ENCODE measurements at regions of chr12 and their contacts with region 1.

Region 1: GRCh38 chr12:116599285-116600136 is 40.3 kb downstream of the MAP1LC3B2 start:
- DNase-seq: peak; percentile 96
- H3K4me3 ChIP-seq: peak overlapping the region; percentile 44 to 53 (median 48)
- H3K27ac ChIP-seq: peak overlapping the region; percentile 85 to 89 (median 86)
- H3K4me1 ChIP-seq: peaks cover 28 to 43% (median 36%) of the 10 kb centered on the region in 4 donors
- H3K27me3 ChIP-seq: no peaks in the 10 kb centered on the region
- CTCF ChIP-seq: peak; percentile 58 to 80 (median 77)
- EP300 ChIP-seq: peak; percentile 49
- POLR2A ChIP-seq: no peak

Region 2: GRCh38 chr12:115998119-115998633 is 601.3 kb before region 1 on chr12:
- intact Hi-C with region 1: loop called (anchors 5 kb)
- DNase-seq: no peak
- H3K4me3 ChIP-seq: no peak overlapping the region
- H3K27ac ChIP-seq: peak overlapping the region; percentile 44 to 71 (median 52)
- H3K4me1 ChIP-seq: peaks cover 12 to 29% (median 25%) of the 10 kb centered on the region in 4 donors
- H3K27me3 ChIP-seq: no peaks in the 10 kb centered on the region
- CTCF ChIP-seq: peak; percentile 74 to 90 (median 78)
- EP300 ChIP-seq: no peak
- POLR2A ChIP-seq: no peak

Region 3: DNA sequence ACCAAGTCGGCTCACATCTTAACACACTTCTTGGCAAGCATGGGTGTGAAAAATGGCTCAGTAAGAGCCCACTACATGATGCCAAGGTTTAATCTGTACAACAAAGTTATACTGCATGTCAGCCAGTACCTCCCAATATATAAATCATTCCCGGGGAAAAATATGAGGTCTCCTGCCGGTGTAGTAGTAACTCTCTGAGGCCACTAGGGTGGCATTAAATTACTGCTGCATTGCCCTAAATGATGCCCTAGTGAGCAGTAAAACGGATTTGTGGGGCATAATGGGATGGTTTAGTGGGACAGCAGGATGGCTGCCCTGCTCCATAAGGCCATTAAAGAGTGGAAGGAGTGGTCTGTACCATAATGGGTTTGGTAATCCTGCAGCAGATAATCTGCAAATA is 589.7 kb before region 1 on chr12:
- intact Hi-C with region 1: loop called (anchors 5 kb)
- DNase-seq: no peak
- H3K4me3 ChIP-seq: no peak overlapping the region
- H3K27ac ChIP-seq: no peak overlapping the region
- H3K4me1 ChIP-seq: peaks cover 0 to 10% (median 8%) of the 10 kb centered on the region in 4 donors
- H3K27me3 ChIP-seq: no peaks in the 10 kb centered on the region
- CTCF ChIP-seq: peak in 1 of 3 experiments; percentile 34
- EP300 ChIP-seq: no peak
- POLR2A ChIP-seq: no peak

Region 4: GRCh38 chr12:116277393-116278278 is 321.9 kb before region 1 on chr12 and contains the start of gene MED13L:
- intact Hi-C with region 1: loop called (anchors 2 kb)
- DNase-seq: peak; percentile 97
- H3K4me3 ChIP-seq: peak within 1 kb of the TSS; percentile 70 to 97 (median 76)
- H3K27ac ChIP-seq: peak within 1 kb of the TSS; percentile 89 to 97 (median 95)
- H3K4me1 ChIP-seq: peaks cover 32 to 42% (median 36%) of the 10 kb centered on the region in 4 donors
- H3K27me3 ChIP-seq: no peaks in the 10 kb centered on the region
- CTCF ChIP-seq: peak; percentile 49 to 64 (median 53)
- EP300 ChIP-seq: no peak
- POLR2A ChIP-seq: no peak
- total RNA-seq, gene MED13L: 141 to 350 (median 175) TPM

Region 5: GRCh38 chr12:116382686-116383531 is 216.6 kb before region 1 on chr12:
- intact Hi-C with region 1: loop called (anchors 10 kb)
- DNase-seq: no peak
- H3K4me3 ChIP-seq: no peak overlapping the region
- H3K27ac ChIP-seq: peak overlapping the region in 3 of 4 donors; percentile 4 to 45 (median 40)
- H3K4me1 ChIP-seq: peaks cover 15 to 41% (median 32%) of the 10 kb centered on the region in 4 donors
- H3K27me3 ChIP-seq: no peaks in the 10 kb centered on the region
- CTCF ChIP-seq: no peak
- EP300 ChIP-seq: no peak
- POLR2A ChIP-seq: no peak

Region 6: DNA sequence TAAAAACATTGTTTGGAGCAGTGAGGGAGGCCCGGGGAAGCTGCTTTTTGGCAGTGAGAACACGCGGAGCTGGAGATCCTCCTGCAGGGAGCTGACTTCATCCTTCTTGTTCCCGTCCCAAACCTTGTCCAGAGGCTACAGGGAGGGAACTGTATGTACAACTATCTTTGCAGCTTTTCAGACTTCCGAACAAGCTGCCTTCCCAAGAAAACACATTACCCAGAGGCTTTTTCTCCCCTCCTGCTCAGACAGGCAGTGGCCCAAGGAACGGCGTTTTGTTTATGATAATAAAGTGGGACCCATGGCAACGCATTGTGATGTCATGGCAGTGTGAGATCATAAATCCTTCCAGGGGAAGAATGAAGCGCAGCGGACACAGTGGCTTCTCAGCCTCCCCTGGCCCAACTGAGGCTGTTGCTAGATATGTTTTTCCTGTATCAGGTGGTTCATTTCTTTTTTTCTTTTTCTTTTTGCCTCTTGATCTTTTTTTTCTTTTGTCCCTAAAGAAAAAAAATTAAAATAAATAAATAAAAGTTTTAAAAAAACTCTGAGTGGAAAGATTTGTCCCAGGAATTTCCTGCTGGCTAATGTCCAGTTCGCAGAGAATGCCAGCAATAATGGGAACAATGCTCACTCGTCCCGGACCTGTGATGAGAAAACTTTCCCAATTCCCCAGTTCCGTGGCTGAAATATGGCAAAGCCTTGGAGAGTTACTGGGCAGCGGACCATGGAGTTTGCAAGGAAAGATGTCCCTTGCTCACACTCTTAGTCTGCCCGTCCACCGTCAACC is 143.8 kb before region 1 on chr12:
- intact Hi-C with region 1: loop called (anchors 10 kb)
- DNase-seq: peak; percentile 96
- H3K4me3 ChIP-seq: peak overlapping the region; percentile 9 to 20 (median 20)
- H3K27ac ChIP-seq: peak overlapping the region; percentile 72 to 88 (median 84)
- H3K4me1 ChIP-seq: peaks cover 11 to 30% (median 27%) of the 10 kb centered on the region in 4 donors
- H3K27me3 ChIP-seq: peaks cover 0 to 5% (median 0%) of the 10 kb centered on the region in 4 donors
- CTCF ChIP-seq: no peak
- EP300 ChIP-seq: peak; percentile 80
- POLR2A ChIP-seq: no peak

Region 7: GRCh38 chr12:116537149-116537904 is 62.2 kb before region 1 on chr12:
- intact Hi-C with region 1: no loop called
- DNase-seq: no peak
- H3K4me3 ChIP-seq: no peak overlapping the region
- H3K27ac ChIP-seq: peak overlapping the region in 3 of 4 donors; percentile 6 to 41 (median 7)
- H3K4me1 ChIP-seq: peaks cover 26 to 52% (median 44%) of the 10 kb centered on the region in 4 donors
- H3K27me3 ChIP-seq: no peaks in the 10 kb centered on the region
- CTCF ChIP-seq: no peak
- EP300 ChIP-seq: no peak
- POLR2A ChIP-seq: no peak

Region 8: DNA sequence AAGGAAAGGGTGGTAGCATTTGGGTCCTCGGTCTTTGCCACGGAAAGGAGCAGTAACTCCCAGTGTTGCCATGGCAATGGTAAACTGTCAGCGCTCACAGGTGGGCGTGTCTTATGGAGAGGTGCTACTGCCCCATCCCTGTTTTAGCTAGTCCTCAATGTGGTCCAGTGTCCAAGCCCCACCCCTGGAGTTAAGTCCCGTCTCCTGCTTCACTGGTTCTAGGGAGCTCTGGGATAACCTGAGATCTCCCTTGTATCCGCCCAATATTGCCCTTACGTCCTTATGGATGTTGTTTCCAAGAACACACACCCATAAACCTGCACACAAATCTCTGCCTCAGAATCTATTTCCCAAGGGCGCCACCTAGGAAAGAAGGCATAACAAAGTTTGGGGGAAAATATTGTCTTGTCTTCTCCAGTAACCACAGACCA is 74.2 kb after region 1 on chr12:
- intact Hi-C with region 1: no loop called
- DNase-seq: no peak
- H3K4me3 ChIP-seq: no peak overlapping the region
- H3K27ac ChIP-seq: no peak overlapping the region
- H3K4me1 ChIP-seq: peaks cover 4 to 17% (median 14%) of the 10 kb centered on the region in 4 donors
- H3K27me3 ChIP-seq: peaks cover 0 to 4% (median 0%) of the 10 kb centered on the region in 4 donors
- CTCF ChIP-seq: no peak
- EP300 ChIP-seq: no peak
- POLR2A ChIP-seq: no peak

Region 9: DNA sequence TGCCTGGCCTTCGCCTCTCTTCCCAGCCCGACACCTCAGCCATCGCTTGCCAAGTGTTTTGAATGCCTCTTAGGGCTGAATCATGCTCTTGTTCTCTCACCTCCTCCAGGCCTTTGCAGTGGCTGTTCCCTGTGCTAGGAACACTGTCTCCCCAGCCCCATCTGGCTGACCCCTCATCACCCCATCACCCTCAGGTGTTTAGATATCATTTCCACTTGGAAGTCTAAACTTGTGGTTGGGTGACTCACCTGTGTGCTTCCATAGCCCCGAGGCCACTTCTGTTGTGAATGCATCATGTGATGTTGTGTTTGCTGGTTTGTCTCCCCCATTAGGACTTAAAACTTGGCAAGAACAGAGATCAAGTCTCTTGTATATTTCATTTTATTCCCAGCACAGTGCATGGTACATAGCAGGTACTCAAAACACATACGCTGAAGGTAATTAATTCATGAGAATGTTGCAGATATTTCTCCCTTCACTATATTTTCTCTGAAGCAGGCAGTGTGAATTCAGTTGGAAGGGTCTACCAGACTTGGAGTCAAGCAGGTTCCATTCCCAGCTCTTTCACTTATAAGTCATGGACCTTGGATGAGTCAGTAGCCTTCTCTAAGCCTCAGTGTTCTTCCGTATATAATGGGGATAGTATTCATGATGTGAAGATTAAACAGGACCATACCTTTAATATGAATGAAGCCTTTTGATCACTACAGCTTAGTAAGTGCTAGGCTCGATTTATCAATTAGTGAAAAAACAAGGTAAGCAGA is 213.9 kb after region 1 on chr12:
- intact Hi-C with region 1: no loop called
- DNase-seq: no peak
- H3K4me3 ChIP-seq: no peak overlapping the region
- H3K27ac ChIP-seq: no peak overlapping the region
- H3K4me1 ChIP-seq: peaks cover 6 to 9% (median 8%) of the 10 kb centered on the region in 4 donors
- H3K27me3 ChIP-seq: no peaks in the 10 kb centered on the region
- CTCF ChIP-seq: no peak
- EP300 ChIP-seq: no peak
- POLR2A ChIP-seq: no peak

Region 10: GRCh38 chr12:117986705-117987469 is 1387.4 kb after region 1 on chr12:
- intact Hi-C with region 1: no loop called
- DNase-seq: no peak
- H3K4me3 ChIP-seq: no peak overlapping the region
- H3K27ac ChIP-seq: no peak overlapping the region
- H3K4me1 ChIP-seq: no peaks in the 10 kb centered on the region
- H3K27me3 ChIP-seq: peaks cover 0 to 6% (median 0%) of the 10 kb centered on the region in 4 donors
- CTCF ChIP-seq: no peak
- EP300 ChIP-seq: no peak
- POLR2A ChIP-seq: no peak